CD8-positive, alpha-beta T cell (primary cell): ENCODE measurements at regions of chr12 and their contacts with region 1.

Region 1: DNA sequence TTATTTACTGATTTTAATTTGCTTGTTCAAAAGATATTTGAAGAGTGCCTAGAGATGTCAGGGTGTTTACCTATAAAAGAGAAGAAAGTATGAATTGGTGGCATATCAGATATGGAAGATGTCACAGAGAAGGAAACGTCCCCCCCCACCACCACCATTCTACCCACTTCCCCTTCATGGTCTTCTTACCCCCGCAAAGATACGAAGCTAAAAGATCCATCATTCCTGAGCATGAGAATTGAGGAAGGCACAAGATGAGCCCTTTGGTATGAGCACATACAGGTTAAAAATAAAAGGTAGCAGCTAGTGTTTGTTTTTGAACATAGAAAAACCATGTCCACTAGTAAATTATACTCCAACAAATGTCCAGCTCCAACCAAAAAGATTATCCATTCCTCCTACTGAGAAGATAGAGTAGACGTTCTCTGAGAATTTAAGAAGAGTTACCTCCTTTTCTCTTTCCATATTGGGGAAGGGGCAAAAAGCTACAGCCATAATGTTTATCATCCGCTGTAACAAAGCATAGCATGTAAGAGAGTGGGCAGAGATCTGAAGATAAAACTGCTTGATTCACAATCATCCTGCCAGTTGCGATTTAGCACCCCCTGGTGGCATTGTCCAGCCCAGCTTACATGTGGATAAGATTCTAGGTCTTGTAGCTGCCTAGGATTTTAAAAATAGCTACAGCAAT is 29.1 kb downstream of the NFYB start:
- DNase-seq: peak; percentile 69 to 92 (median 88)
- ATAC-seq: peak; percentile 98
- H3K4me3 ChIP-seq: no peak overlapping the region
- H3K4me3 Mint-ChIP-seq: peak overlapping the region; percentile 76
- H3K27ac ChIP-seq: no peak overlapping the region
- H3K27ac Mint-ChIP-seq: peak overlapping the region; percentile 80
- H3K4me1 ChIP-seq: peaks cover 8% of the 10 kb centered on the region
- H3K4me1 Mint-ChIP-seq: peaks cover 15% of the 10 kb centered on the region
- H3K27me3 ChIP-seq: no peaks in the 10 kb centered on the region
- H3K27me3 Mint-ChIP-seq: no peaks in the 10 kb centered on the region
- CTCF ChIP-seq: peak; percentile 74

Region 2: GRCh38 chr12:103884316-103884715 is 224.6 kb before region 1 on chr12:
- CTCF ChIA-PET with region 1: interaction called, 69 read pairs
- POLR2A ChIA-PET with region 1: interaction called, 8 read pairs
- intact Hi-C with region 1: loop called (anchors 1 kb)
- DNase-seq: peak; percentile 10 to 76 (median 43)
- ATAC-seq: peak; percentile 67
- H3K4me3 ChIP-seq: no peak overlapping the region
- H3K4me3 Mint-ChIP-seq: no peak overlapping the region
- H3K27ac ChIP-seq: no peak overlapping the region
- H3K27ac Mint-ChIP-seq: no peak overlapping the region
- H3K4me1 ChIP-seq: peaks cover 11% of the 10 kb centered on the region
- H3K4me1 Mint-ChIP-seq: peaks cover 32% of the 10 kb centered on the region
- H3K27me3 ChIP-seq: no peaks in the 10 kb centered on the region
- H3K27me3 Mint-ChIP-seq: no peaks in the 10 kb centered on the region
- CTCF ChIP-seq: peak; percentile 71

Region 3: GRCh38 chr12:103965590-103966504 is 143.1 kb before region 1 on chr12 and contains the start of gene TDG:
- CTCF ChIA-PET with region 1: interaction called, 7 read pairs
- POLR2A ChIA-PET with region 1: interaction called, 3 read pairs
- intact Hi-C with region 1: loop called in 1 of 2 experiments (anchors 5 kb)
- DNase-seq: peak; percentile 94 to 99 (median 97)
- ATAC-seq: peak; percentile 92
- H3K4me3 ChIP-seq: peak within 1 kb of the TSS; percentile 54 to 83
- H3K4me3 Mint-ChIP-seq: peak within 1 kb of the TSS; percentile 96
- H3K27ac ChIP-seq: peak within 1 kb of the TSS; percentile 79 to 92
- H3K27ac Mint-ChIP-seq: peak within 1 kb of the TSS; percentile 99
- H3K4me1 ChIP-seq: peaks cover 41% of the 10 kb centered on the region
- H3K4me1 Mint-ChIP-seq: peaks cover 59% of the 10 kb centered on the region
- H3K27me3 ChIP-seq: no peaks in the 10 kb centered on the region
- H3K27me3 Mint-ChIP-seq: no peaks in the 10 kb centered on the region
- CTCF ChIP-seq: no peak
- total RNA-seq, gene TDG: 30.5 to 36.8 TPM

Region 4: GRCh38 chr12:104026841-104027599 is 81.9 kb before region 1 on chr12:
- CTCF ChIA-PET with region 1: no interaction called
- POLR2A ChIA-PET with region 1: no interaction called
- intact Hi-C with region 1: no loop called
- DNase-seq: no peak
- ATAC-seq: no peak
- H3K4me3 ChIP-seq: no peak overlapping the region
- H3K4me3 Mint-ChIP-seq: no peak overlapping the region
- H3K27ac ChIP-seq: no peak overlapping the region
- H3K27ac Mint-ChIP-seq: no peak overlapping the region
- H3K4me1 ChIP-seq: no peaks in the 10 kb centered on the region
- H3K4me1 Mint-ChIP-seq: no peaks in the 10 kb centered on the region
- H3K27me3 ChIP-seq: no peaks in the 10 kb centered on the region
- H3K27me3 Mint-ChIP-seq: peaks cover 10% of the 10 kb centered on the region
- CTCF ChIP-seq: no peak

Region 5: GRCh38 chr12:104083769-104084475 is 25.0 kb before region 1 on chr12:
- CTCF ChIA-PET with region 1: interaction called, 12 read pairs
- POLR2A ChIA-PET with region 1: no interaction called
- intact Hi-C with region 1: no loop called
- DNase-seq: no peak
- ATAC-seq: no peak
- H3K4me3 ChIP-seq: no peak overlapping the region
- H3K4me3 Mint-ChIP-seq: no peak overlapping the region
- H3K27ac ChIP-seq: no peak overlapping the region
- H3K27ac Mint-ChIP-seq: no peak overlapping the region
- H3K4me1 ChIP-seq: no peaks in the 10 kb centered on the region
- H3K4me1 Mint-ChIP-seq: peaks cover 11% of the 10 kb centered on the region
- H3K27me3 ChIP-seq: no peaks in the 10 kb centered on the region
- H3K27me3 Mint-ChIP-seq: no peaks in the 10 kb centered on the region
- CTCF ChIP-seq: no peak

Region 6: GRCh38 chr12:104121001-104121400 is 12.1 kb after region 1 on chr12:
- CTCF ChIA-PET with region 1: interaction called, 21 read pairs
- POLR2A ChIA-PET with region 1: no interaction called
- intact Hi-C with region 1: no loop called
- DNase-seq: no peak
- ATAC-seq: no peak
- H3K4me3 ChIP-seq: no peak overlapping the region
- H3K4me3 Mint-ChIP-seq: no peak overlapping the region
- H3K27ac ChIP-seq: no peak overlapping the region
- H3K27ac Mint-ChIP-seq: no peak overlapping the region
- H3K4me1 ChIP-seq: no peaks in the 10 kb centered on the region
- H3K4me1 Mint-ChIP-seq: peaks cover 3% of the 10 kb centered on the region
- H3K27me3 ChIP-seq: no peaks in the 10 kb centered on the region
- H3K27me3 Mint-ChIP-seq: no peaks in the 10 kb centered on the region
- CTCF ChIP-seq: no peak